ENCODE measurements at regions of chr10 and their contacts with region 1.

Region 1: GRCh38 chr10:110864662-110865140 is 7.0 kb upstream of the PDCD4 start:
- DNase-seq: peak; percentile 81
- ATAC-seq: peak; percentile 69
- H3K4me3 Mint-ChIP-seq: peak overlapping the region; percentile 81
- H3K27ac Mint-ChIP-seq: peak overlapping the region; percentile 96
- H3K4me1 Mint-ChIP-seq: peaks cover 99% of the 10 kb centered on the region
- H3K27me3 Mint-ChIP-seq: no peaks in the 10 kb centered on the region

Region 2: GRCh38 chr10:110852255-110852896 is 12.3 kb before region 1 on chr10:
- CTCF ChIA-PET with region 1: interaction called, 16 read pairs
- POLR2A ChIA-PET with region 1: interaction called, 13 read pairs
- DNase-seq: no peak
- ATAC-seq: peak; percentile 33
- H3K4me3 Mint-ChIP-seq: peak overlapping the region; percentile 22
- H3K27ac Mint-ChIP-seq: no peak overlapping the region
- H3K4me1 Mint-ChIP-seq: peaks cover 71% of the 10 kb centered on the region
- H3K27me3 Mint-ChIP-seq: no peaks in the 10 kb centered on the region

Region 3: GRCh38 chr10:110967645-110968044 is 102.9 kb after region 1 on chr10:
- CTCF ChIA-PET with region 1: no interaction called
- POLR2A ChIA-PET with region 1: no interaction called
- DNase-seq: no peak
- ATAC-seq: no peak
- H3K4me3 Mint-ChIP-seq: no peak overlapping the region
- H3K27ac Mint-ChIP-seq: no peak overlapping the region
- H3K4me1 Mint-ChIP-seq: peaks cover 5% of the 10 kb centered on the region
- H3K27me3 Mint-ChIP-seq: no peaks in the 10 kb centered on the region

Measured in activated CD8-positive, alpha-beta T cell treated with anti-CD3 and anti-CD28 coated beads, Interleukin-2, amount 10 ng/mL, durations not matched to agents 7 days and 5 days (primary cell).